ENCODE measurements at regions of chr6 and their contacts with region 1.

Region 1: DNA sequence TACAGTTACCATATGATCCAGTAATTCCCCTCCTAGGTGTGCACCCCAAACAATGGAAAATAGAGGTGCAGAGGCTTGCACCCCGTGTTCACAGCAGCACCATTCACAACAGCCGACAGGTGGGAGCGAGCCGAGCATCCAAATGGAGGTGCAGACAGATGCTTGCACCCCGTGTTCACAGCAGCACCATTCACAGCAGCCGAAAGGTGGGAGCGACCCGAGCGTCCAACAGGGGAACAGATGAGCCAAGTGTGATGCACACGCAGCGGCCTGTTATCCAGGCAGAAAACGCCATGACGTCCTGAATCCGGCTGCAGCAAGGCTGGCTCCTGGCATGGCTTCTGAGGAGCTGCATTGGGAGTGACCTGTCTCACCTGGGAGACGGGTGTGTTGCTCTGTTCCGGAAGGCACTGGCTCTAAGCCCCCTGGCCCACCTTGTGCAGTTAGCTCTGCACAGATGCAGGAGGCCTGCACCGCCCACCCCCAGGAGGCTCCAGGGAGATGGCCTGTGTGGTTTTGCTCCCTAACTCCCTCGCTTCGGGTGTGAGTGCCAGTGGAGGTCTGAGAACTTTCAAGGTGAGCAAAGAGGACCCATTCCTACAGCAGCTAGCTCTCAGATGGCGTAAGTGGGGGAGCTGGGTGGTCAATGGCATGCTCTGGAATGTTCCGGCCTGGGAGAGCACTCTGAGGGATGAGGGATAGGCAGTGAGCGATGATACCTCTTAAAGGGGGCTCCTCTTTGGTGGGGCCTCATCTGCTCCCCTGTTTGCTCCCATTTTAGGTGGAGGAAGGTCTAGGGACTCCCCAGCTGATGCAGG is 47.8 kb upstream of the FRMD1 start:
- DNase-seq: no peak
- ATAC-seq: no peak
- H3K4me3 ChIP-seq: no peak overlapping the region
- H3K27ac ChIP-seq: no peak overlapping the region
- H3K4me1 ChIP-seq: no peaks in the 10 kb centered on the region
- H3K27me3 ChIP-seq: no peaks in the 10 kb centered on the region
- CTCF ChIP-seq: no peak
- POLR2A ChIP-seq: no peak

Region 2: DNA sequence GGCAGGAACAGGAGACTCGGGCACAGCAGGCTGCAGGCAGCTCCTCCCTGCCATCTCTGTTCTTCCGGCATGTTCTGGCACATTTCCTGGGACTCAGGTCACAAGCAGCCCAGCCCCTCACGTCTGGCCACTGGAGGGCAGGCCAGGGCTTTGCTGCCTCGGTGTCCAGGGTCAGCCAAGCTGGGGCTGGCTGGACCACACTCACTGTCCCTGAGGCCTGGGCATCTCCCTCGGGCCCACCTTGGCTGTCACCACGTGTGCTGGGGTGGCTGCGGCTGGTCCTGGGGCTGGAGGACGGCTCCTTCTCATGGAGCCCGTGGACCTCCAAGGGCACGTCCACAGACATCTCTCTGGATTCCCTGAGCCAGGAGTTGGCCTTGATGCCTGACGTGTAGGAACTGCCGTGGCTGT is 66.2 kb before region 1 on chr6:
- intact Hi-C with region 1: loop called in 9 of 10 experiments (anchors 5 kb)
- DNase-seq: peak; percentile 74 to 82 (median 80)
- ATAC-seq: peak; percentile 59 to 88 (median 77)
- H3K4me3 ChIP-seq: no peak overlapping the region
- H3K27ac ChIP-seq: no peak overlapping the region
- H3K4me1 ChIP-seq: peaks cover 3 to 26% (median 9%) of the 10 kb centered on the region in 12 donors
- H3K27me3 ChIP-seq: no peaks in the 10 kb centered on the region
- CTCF ChIP-seq: peak; percentile 42 to 79 (median 68)
- POLR2A ChIP-seq: no peak

Region 3: DNA sequence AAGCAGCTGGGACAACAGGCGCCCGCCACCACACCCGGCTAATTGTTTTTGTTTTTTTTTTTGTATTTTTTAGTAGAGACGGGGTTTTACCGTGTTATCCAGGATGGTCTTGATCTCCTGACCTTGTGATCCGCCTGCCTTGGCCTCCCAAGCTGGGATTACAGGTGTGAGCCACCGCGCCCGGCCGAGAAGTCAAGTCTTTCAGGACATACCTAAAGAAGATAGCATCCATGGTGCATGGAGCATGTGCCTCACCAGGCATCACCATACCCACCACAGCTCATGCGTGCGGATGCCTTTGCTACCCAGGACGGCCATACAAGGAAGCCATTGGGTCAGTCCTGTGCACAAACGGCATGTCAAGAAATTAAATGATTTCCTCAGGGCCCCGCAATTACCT is 132.0 kb after region 1 on chr6:
- intact Hi-C with region 1: no loop called
- DNase-seq: no peak
- ATAC-seq: no peak
- H3K4me3 ChIP-seq: no peak overlapping the region
- H3K27ac ChIP-seq: no peak overlapping the region
- H3K4me1 ChIP-seq: no peaks in the 10 kb centered on the region
- H3K27me3 ChIP-seq: peaks cover 0 to 17% (median 0%) of the 10 kb centered on the region in 9 donors
- CTCF ChIP-seq: no peak
- POLR2A ChIP-seq: no peak

Measured in heart left ventricle (tissue), 16 donors.